ENCODE measurements at regions of chr17 and their contacts with region 1.

Region 1: DNA sequence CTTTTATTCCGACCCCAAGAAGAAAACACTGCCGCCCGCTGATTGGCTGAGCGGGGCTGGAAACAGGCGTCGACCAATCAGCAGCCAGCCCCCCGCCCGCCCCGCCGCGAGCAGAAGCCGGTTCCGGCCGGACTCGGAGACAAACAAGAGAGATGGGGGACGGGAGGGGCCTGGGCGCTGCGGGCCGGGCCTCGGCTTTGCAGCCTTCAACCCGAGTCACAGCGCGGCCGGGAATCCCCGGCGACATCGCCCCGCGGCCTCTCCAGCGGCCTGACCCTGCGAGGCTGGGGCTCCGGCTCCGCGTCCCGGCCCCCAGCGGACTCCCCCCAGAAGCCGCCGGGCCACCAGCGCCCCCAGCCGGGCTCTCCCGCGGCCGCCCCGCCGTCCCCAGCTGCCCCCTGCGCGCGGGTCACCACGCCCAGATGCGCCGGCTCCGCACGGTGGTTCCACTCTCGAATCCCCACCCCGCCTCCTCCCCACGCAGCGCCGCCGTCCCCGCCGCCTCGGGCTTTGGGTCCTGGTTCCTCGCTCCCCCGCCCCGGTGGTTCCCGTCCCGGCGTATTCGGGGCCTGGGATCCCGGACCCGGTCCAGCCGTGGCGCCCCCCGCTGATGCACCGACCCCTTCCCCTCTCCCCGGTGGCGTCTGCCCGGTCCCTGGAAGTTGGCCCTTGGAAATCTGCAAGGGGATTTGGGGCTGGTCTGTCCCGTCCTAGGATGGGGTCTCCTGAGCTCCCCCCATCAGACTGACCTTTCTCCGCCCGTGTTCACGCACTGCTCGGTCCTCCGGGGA is 417 bp upstream of the SLC43A2 start:
- DNase-seq: peak; percentile 92 to 95
- ATAC-seq: peak; percentile 76 to 85
- H3K4me3 ChIP-seq: peak overlapping the region; percentile 80 to 94 (median 86)
- H3K27ac ChIP-seq: peak overlapping the region; percentile 91 to 99 (median 94)
- H3K4me1 ChIP-seq: peaks cover 22 to 34% of the 10 kb centered on the region in 2 donors
- H3K27me3 ChIP-seq: no peaks in the 10 kb centered on the region
- CTCF ChIP-seq: peak in 4 of 5 experiments; percentile 68 to 83 (median 80)
- POLR2A ChIP-seq: peak; percentile 69 to 79

Region 2: GRCh38 chr17:1267471-1267947 is 361.5 kb before region 1 on chr17:
- in situ Hi-C with region 1: loop called in 2 of 4 experiments (anchors 25 kb)
- intact Hi-C with region 1: loop called (anchors 5 kb)
- DNase-seq: peak; percentile 14 to 42
- ATAC-seq: peak; percentile 29 to 58
- H3K4me3 ChIP-seq: peak overlapping the region; percentile 66 to 82 (median 81)
- H3K27ac ChIP-seq: peak overlapping the region; percentile 82 to 85 (median 84)
- H3K4me1 ChIP-seq: peaks cover 0 to 6% of the 10 kb centered on the region in 2 donors
- H3K27me3 ChIP-seq: peaks cover 12 to 20% (median 16%) of the 10 kb centered on the region in 3 donors
- CTCF ChIP-seq: no peak
- POLR2A ChIP-seq: no peak

Region 3: DNA sequence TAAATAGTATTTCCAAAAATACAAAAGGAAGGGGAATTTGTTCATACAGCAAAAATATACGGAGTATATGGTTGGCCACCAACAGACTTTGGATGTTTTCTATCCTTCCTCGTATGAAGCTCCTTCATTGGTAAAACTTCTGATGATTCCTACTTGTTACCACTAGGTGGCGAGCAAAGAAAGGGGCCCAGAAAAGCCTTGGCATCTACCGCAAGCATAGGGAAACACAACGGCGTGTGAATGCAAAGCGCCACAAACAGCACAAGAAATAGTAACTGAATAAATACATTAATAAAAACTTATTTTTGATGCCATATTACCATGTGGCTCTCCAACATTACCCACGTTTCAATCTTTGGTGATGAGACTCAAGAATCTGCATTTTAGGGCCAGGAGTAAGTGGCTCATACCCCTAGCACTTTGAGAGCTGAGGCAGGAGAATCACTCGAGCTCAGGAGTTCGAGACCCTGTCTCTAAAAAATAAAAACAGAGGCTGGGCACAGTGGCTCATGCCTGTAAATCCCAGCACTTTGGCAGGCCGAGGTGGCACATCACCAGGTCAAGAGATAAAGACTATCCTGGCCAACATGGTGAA is 263.5 kb before region 1 on chr17:
- in situ Hi-C with region 1: no loop called
- intact Hi-C with region 1: loop called (anchors 5 kb)
- DNase-seq: peak; percentile 60 to 66
- ATAC-seq: peak; percentile 76 to 80
- H3K4me3 ChIP-seq: peak overlapping the region in 1 of 4 donors; percentile 15
- H3K27ac ChIP-seq: peak overlapping the region; percentile 74 to 81 (median 76)
- H3K4me1 ChIP-seq: peaks cover 83 to 86% of the 10 kb centered on the region in 2 donors
- H3K27me3 ChIP-seq: no peaks in the 10 kb centered on the region
- CTCF ChIP-seq: peak; percentile 77 to 91 (median 88)
- POLR2A ChIP-seq: no peak

Region 4: DNA sequence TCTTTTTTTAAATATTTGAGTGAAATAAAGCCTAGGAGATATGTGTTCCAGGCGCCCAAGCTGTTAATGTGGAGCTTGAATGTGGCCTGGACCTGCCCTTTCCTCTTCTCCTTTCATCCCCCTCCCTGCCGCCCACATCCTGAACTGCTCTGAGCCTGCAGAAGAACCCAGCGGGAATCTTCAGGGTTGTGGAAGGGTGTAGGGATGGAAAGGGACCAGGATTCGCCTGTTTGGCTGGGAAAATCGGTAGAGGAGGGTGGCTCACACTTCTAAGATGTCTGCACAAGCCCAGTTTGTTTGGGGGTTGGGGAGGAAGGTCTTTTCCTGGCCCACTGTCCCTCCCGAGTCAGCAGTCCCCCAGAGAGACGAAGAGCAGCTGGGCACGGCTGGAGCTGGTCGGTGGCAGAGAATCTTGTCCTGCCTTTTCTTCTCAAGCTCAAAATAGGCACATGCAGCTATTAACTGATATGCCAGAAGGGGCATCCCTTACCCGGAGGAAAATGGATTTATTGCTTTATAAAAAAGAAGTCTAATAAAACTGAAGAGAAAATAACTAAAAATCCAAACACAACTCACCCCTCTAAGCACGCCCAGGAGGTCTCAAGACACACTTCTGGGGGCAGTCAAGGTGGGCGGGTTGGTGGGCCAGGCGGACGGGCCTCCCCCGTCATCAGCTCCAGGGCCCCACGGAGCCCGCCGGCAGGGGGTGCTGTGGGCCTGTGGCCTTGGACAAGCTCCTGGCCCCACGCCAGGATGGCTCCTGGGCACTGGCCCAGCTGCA is 54.9 kb before region 1 on chr17:
- in situ Hi-C with region 1: loop called (anchors 5 to 10 kb)
- intact Hi-C with region 1: loop called (anchors 1 kb)
- DNase-seq: peak; percentile 59 to 74
- ATAC-seq: peak; percentile 46 to 54
- H3K4me3 ChIP-seq: no peak overlapping the region
- H3K27ac ChIP-seq: peak overlapping the region; percentile 90 to 97 (median 95)
- H3K4me1 ChIP-seq: peaks cover 40 to 44% of the 10 kb centered on the region in 2 donors
- H3K27me3 ChIP-seq: no peaks in the 10 kb centered on the region
- CTCF ChIP-seq: peak; percentile 97 to 99 (median 99)
- POLR2A ChIP-seq: no peak

Region 5: GRCh38 chr17:1590031-1590748 is 38.9 kb before region 1 on chr17:
- in situ Hi-C with region 1: no loop called
- intact Hi-C with region 1: loop called (anchors 1 kb)
- DNase-seq: peak; percentile 95 to 98
- ATAC-seq: peak; percentile 79 to 84
- H3K4me3 ChIP-seq: peak overlapping the region in 3 of 4 donors; percentile 14 to 30 (median 18)
- H3K27ac ChIP-seq: peak overlapping the region; percentile 91 to 98 (median 96)
- H3K4me1 ChIP-seq: peaks cover 78% of the 10 kb centered on the region in 2 donors
- H3K27me3 ChIP-seq: no peaks in the 10 kb centered on the region
- CTCF ChIP-seq: peak in 1 of 5 experiments; percentile 12
- POLR2A ChIP-seq: peak; percentile 58 to 64